ENCODE measurements at regions of chr15 and their contacts with region 1.

Region 1: GRCh38 chr15:71294886-71295638 is 179.8 kb downstream of the THSD4 start:
- DNase-seq: peak; percentile 99
- H3K4me3 ChIP-seq: no peak overlapping the region
- H3K27ac ChIP-seq: peak overlapping the region; percentile 97
- H3K4me1 ChIP-seq: peaks cover 35% of the 10 kb centered on the region
- H3K27me3 ChIP-seq: no peaks in the 10 kb centered on the region
- CTCF ChIP-seq: no peak
- POLR2A ChIP-seq: peak; percentile 81

Region 2: GRCh38 chr15:70701891-70702568 is 593.0 kb before region 1 on chr15:
- CTCF ChIA-PET with region 1: no interaction called
- POLR2A ChIA-PET with region 1: no interaction called
- dilution Hi-C with region 1: no loop called
- intact Hi-C with region 1: loop called (anchors 10 kb)
- DNase-seq: peak; percentile 86
- H3K4me3 ChIP-seq: peak overlapping the region in 2 of 3 experiments; percentile 35 to 96
- H3K27ac ChIP-seq: peak overlapping the region; percentile 94
- H3K4me1 ChIP-seq: peaks cover 55% of the 10 kb centered on the region
- H3K27me3 ChIP-seq: no peaks in the 10 kb centered on the region
- CTCF ChIP-seq: no peak
- POLR2A ChIP-seq: peak; percentile 20

Region 3: DNA sequence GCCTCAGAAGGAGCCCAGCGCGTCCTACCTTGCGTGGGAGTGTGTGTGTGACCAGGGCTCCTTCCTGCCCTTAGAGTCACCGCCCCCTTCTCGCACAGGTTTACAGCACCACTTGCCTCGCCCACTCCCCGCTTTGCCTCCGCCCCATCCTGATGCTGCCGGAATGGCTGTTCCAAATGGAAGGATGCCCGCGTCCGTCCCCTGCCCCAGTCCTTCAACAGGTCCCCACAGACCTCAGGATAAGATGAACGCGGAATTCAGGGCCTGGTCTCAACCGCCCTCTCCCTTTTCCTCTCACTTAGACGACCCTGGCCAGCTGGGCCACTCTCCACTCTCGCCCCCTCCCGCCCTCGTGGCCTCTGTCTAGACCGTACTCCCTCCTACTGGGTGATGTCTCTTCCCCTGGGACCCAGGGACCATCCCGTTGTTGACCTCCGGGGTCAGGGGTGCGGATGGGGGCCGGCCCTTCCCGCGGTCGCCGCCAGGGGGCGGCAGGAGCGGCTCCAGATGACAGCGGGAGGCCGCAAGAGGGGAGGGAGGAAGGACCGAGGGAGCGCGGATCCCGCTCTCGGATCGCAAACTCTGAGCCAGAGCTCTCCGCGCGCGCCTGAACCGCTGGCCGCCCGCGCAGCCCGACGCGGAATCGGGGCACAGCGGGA is 180.0 kb before region 1 on chr15 and contains the start of gene THSD4:
- CTCF ChIA-PET with region 1: interaction called, 5 read pairs
- POLR2A ChIA-PET with region 1: no interaction called
- dilution Hi-C with region 1: no loop called
- intact Hi-C with region 1: loop called (anchors 1 kb)
- DNase-seq: peak; percentile 60
- H3K4me3 ChIP-seq: peak within 1 kb of the TSS; percentile 61 to 87 (median 66)
- H3K27ac ChIP-seq: peak within 1 kb of the TSS; percentile 66
- H3K4me1 ChIP-seq: peaks cover 7% of the 10 kb centered on the region
- H3K27me3 ChIP-seq: no peaks in the 10 kb centered on the region
- CTCF ChIP-seq: peak; percentile 97 to 98
- POLR2A ChIP-seq: no peak
- total RNA-seq, gene THSD4: 20.2 and 25.4 TPM in 2 replicates

Region 4: DNA sequence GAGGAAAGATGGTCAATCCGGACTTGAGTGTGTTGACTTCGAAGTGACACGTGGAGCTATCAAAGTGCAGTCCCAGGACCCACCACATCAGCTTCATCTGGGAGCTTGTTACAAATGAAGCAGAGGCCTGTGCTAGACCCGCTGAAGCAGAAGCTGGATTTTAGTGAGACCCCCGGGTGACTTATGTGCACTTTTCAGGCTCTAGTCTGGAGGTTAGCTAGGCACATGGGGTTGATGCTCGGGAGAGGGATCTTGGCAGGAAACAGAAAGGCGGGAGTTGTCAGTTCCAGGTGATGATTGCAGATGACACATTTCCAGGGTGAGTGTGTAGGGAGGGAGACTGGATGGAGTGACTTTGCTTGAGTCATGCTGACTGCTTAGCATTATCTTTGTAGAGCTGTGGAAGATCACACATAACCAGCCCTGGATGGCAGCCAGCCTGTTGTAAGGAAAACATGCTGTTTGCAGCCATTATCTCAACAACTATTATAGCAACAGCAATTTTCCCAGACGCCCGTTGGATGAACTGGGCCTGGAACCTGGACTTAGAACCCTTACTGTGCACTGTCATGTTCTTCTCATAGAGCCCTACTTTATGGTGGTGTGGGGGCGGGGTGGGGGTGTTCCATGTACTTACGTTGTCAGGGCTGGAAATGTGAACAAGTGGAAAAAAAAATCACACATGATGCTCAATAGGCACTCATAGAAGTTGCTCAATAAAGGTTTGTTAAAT is 57.4 kb before region 1 on chr15:
- CTCF ChIA-PET with region 1: no interaction called
- POLR2A ChIA-PET with region 1: no interaction called
- dilution Hi-C with region 1: no loop called
- intact Hi-C with region 1: loop called (anchors 1 kb)
- DNase-seq: peak; percentile 84
- H3K4me3 ChIP-seq: no peak overlapping the region
- H3K27ac ChIP-seq: peak overlapping the region; percentile 51
- H3K4me1 ChIP-seq: peaks cover 13% of the 10 kb centered on the region
- H3K27me3 ChIP-seq: no peaks in the 10 kb centered on the region
- CTCF ChIP-seq: no peak
- POLR2A ChIP-seq: no peak

Region 5: DNA sequence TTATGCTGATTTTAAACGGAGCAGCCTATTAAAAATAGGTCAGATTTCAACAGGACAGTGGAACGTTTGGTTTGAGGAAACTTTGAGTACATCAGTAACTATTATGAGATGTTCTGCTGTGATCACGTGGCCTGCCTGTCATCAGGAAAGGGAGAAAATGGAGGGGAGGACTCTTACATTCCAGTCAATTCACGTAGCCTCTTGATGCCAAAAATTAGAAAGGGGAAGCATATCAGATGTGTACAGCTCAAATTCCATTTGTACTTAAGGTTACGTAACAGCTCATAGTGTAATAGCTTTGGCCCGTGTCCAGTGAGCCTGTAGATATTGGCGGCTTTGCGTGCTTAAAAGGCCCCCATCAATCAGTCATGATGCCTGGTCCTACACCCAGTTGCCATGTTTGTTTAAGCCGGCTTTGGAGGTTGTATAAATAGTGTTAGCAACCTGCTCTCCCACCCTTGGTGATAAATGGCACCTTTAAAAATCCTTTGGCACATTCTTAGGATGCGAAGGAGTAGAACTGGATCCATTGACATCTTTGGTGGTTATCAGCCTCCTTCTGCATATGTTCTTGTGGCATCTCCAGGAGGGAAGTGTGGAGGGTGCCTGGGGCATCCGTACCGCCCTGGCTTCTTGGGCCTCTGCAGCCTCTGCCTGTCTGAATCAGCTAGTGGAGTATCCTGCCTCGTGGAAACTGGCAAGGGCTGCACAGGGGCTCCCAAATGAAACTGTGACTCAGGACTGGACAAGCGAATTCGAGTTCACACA is 15.9 kb before region 1 on chr15:
- CTCF ChIA-PET with region 1: interaction called, 9 read pairs
- POLR2A ChIA-PET with region 1: interaction called, 8 read pairs
- dilution Hi-C with region 1: no loop called
- intact Hi-C with region 1: loop called (anchors 1 kb)
- DNase-seq: peak; percentile 93
- H3K4me3 ChIP-seq: no peak overlapping the region
- H3K27ac ChIP-seq: peak overlapping the region; percentile 54
- H3K4me1 ChIP-seq: peaks cover 44% of the 10 kb centered on the region
- H3K27me3 ChIP-seq: no peaks in the 10 kb centered on the region
- CTCF ChIP-seq: no peak
- POLR2A ChIP-seq: no peak

Region 6: DNA sequence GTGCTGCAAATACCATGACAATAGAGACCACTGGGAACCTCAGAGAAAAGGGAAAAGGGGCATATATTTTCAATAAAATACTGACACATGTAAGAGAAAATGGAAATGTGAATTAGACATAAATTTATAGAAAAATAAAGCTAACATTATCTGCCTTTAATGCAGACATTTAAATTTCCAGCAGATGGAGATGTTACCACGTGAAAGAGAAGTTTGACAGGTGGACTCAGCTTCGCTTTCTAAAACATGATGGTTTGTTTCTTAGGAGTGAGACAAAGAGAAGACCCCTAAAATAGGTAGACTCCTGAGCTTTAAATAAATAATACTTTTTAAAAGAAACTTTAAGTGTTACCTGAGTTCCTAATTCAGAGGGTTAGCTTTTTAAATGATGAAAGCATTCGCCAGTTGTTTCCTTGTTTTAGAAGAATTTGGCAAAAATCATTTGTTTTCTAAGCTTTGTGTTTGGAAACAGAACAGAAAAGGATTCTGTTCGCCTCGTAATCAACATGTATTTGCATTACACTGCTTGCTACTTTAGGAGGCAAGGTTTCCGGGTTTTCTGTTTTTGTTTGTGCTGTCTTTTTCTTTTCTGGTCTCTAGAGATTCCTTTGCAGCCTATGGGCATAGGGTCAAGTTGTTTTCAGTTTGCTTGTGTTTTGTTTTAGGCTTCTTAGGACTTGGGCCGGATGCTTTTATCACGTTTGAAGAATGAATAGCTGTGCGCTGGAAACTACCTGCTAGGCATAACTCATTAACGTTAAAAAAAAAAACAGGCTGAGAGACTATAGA is 91.6 kb after region 1 on chr15:
- CTCF ChIA-PET with region 1: interaction called, 3 read pairs
- POLR2A ChIA-PET with region 1: no interaction called
- dilution Hi-C with region 1: no loop called
- intact Hi-C with region 1: loop called (anchors 1 kb)
- DNase-seq: peak; percentile 44
- H3K4me3 ChIP-seq: no peak overlapping the region
- H3K27ac ChIP-seq: no peak overlapping the region
- H3K4me1 ChIP-seq: peaks cover 11% of the 10 kb centered on the region
- H3K27me3 ChIP-seq: no peaks in the 10 kb centered on the region
- CTCF ChIP-seq: peak; percentile 11 to 12
- POLR2A ChIP-seq: no peak

Region 7: GRCh38 chr15:71508081-71508682 is 213.1 kb after region 1 on chr15:
- CTCF ChIA-PET with region 1: no interaction called
- POLR2A ChIA-PET with region 1: no interaction called
- dilution Hi-C with region 1: no loop called
- intact Hi-C with region 1: no loop called
- DNase-seq: no peak
- H3K4me3 ChIP-seq: no peak overlapping the region
- H3K27ac ChIP-seq: no peak overlapping the region
- H3K4me1 ChIP-seq: no peaks in the 10 kb centered on the region
- H3K27me3 ChIP-seq: peaks cover 0 to 2% of the 10 kb centered on the region in 2 experiments
- CTCF ChIP-seq: no peak
- POLR2A ChIP-seq: no peak

Measured in endothelial cell of umbilical vein (primary cell).